ENCODE measurements at regions of chr19 and their contacts with region 1.

Region 1: DNA sequence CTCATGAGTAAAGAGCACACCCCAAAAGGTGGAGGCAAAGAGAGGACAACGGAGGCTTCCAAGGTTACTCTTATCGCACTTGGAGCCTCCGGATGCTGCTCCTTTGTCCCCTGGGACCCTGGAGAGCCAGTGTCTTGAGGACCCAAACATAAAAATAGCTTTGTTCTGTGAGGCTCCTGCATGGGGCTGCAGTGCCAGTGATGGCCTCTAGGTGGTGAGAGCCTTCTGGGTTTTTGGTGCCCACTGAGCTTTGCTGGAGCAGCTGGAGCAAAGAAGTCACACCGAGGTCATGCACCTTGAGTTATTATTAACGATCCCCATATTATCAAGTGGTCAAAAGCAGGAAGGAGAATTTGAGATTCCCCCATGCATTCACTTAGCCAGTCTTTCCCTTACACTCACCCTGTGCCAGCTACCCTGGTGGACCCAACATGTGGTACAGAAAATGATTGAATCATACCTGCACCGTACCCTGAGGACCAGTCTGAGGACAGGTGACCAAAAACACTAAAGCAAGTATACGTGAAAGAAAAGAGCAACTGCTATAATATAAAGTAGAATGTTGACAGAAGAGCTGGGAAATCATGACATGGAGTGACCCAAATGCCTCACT is 41.5 kb downstream of the ZNF682 start:
- DNase-seq: peak; percentile 16 to 68 (median 19)
- H3K4me3 ChIP-seq: no peak overlapping the region
- H3K4me3 Mint-ChIP-seq: no peak overlapping the region
- H3K27ac ChIP-seq: no peak overlapping the region
- H3K27ac Mint-ChIP-seq: no peak overlapping the region
- H3K4me1 ChIP-seq: no peaks in the 10 kb centered on the region
- H3K4me1 Mint-ChIP-seq: no peaks in the 10 kb centered on the region
- H3K27me3 ChIP-seq: no peaks in the 10 kb centered on the region
- H3K27me3 Mint-ChIP-seq: no peaks in the 10 kb centered on the region

Region 2: DNA sequence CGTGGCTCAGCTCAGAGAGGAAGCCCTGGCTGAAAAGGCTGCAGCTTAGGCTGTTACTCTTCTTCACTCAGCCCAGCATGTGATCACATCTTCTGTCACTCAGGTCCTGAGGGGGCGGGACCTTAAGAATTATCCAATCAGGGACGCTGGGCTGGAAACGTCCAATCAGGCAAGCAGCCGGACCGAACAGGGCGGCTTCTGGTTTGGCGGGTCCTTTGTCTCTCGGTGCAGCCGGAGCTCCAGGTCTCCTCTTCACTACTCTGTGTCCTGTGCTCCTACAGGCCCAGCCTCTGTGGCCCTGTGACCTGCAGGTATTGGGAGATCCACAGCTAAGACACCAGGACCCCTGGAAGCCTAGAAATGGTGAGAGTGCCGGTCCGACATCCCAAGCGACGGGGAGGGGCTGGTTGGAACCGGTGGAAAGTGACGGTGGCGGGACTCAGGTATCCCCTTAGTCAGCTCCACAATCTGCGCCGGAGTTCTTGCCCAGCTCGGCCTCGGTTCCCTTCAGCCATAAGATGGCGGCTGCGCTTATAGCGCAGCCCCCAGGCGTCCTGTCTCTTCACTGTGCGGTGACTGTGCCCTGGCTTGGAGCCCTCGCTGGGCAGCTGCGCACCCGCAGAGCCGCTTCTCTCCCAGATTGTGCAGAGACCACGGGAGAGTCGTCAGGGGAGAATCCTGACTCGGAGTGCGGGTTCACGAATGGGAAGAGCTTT is 96.9 kb before region 1 on chr19 and contains the start of gene ZNF93:
- CTCF ChIA-PET with region 1: no interaction called
- POLR2A ChIA-PET with region 1: no interaction called
- DNase-seq: peak; percentile 80 to 93 (median 88)
- H3K4me3 ChIP-seq: peak within 1 kb of the TSS; percentile 91
- H3K4me3 Mint-ChIP-seq: peak within 1 kb of the TSS; percentile 90 to 99 (median 95)
- H3K27ac ChIP-seq: peak within 1 kb of the TSS; percentile 71
- H3K27ac Mint-ChIP-seq: peak within 1 kb of the TSS; percentile 45 to 96 (median 93)
- H3K4me1 ChIP-seq: peaks cover 8% of the 10 kb centered on the region
- H3K4me1 Mint-ChIP-seq: peaks cover 23 to 44% (median 32%) of the 10 kb centered on the region in 3 donors
- H3K27me3 ChIP-seq: no peaks in the 10 kb centered on the region
- H3K27me3 Mint-ChIP-seq: no peaks in the 10 kb centered on the region
- total RNA-seq, gene ZNF93: 8.6 to 9.1 TPM

Region 3: GRCh38 chr19:20103091-20103740 is 105.5 kb after region 1 on chr19:
- CTCF ChIA-PET with region 1: no interaction called
- POLR2A ChIA-PET with region 1: no interaction called
- DNase-seq: no peak
- H3K4me3 ChIP-seq: no peak overlapping the region
- H3K4me3 Mint-ChIP-seq: no peak overlapping the region
- H3K27ac ChIP-seq: no peak overlapping the region
- H3K27ac Mint-ChIP-seq: no peak overlapping the region
- H3K4me1 ChIP-seq: no peaks in the 10 kb centered on the region
- H3K4me1 Mint-ChIP-seq: no peaks in the 10 kb centered on the region
- H3K27me3 ChIP-seq: no peaks in the 10 kb centered on the region
- H3K27me3 Mint-ChIP-seq: peaks cover 0 to 1% of the 10 kb centered on the region in 2 donors

Region 4: GRCh38 chr19:20278342-20278741 is 280.6 kb after region 1 on chr19:
- CTCF ChIA-PET with region 1: interaction called, 39 read pairs
- POLR2A ChIA-PET with region 1: no interaction called
- DNase-seq: peak in 4 of 5 donors; percentile 2 to 57 (median 43)
- H3K4me3 ChIP-seq: no peak overlapping the region
- H3K4me3 Mint-ChIP-seq: no peak overlapping the region
- H3K27ac ChIP-seq: no peak overlapping the region
- H3K27ac Mint-ChIP-seq: no peak overlapping the region
- H3K4me1 ChIP-seq: no peaks in the 10 kb centered on the region
- H3K4me1 Mint-ChIP-seq: peaks cover 0 to 13% (median 4%) of the 10 kb centered on the region in 3 donors
- H3K27me3 ChIP-seq: no peaks in the 10 kb centered on the region
- H3K27me3 Mint-ChIP-seq: peaks cover 0 to 5% of the 10 kb centered on the region in 2 donors

Measured in CD8-positive, alpha-beta memory T cell (primary cell).